ENCODE measurements at regions of chr7 and their contacts with region 1.

Region 1: GRCh38 chr7:16420649-16421332 is 547 bp downstream of the CRPPA start:
- DNase-seq: peak; percentile 93
- H3K4me3 Mint-ChIP-seq: peak overlapping the region; percentile 74
- H3K27ac Mint-ChIP-seq: peak overlapping the region; percentile 86
- H3K4me1 Mint-ChIP-seq: peaks cover 53% of the 10 kb centered on the region
- H3K27me3 Mint-ChIP-seq: no peaks in the 10 kb centered on the region
- CTCF ChIP-seq: peak; percentile 67

Region 2: DNA sequence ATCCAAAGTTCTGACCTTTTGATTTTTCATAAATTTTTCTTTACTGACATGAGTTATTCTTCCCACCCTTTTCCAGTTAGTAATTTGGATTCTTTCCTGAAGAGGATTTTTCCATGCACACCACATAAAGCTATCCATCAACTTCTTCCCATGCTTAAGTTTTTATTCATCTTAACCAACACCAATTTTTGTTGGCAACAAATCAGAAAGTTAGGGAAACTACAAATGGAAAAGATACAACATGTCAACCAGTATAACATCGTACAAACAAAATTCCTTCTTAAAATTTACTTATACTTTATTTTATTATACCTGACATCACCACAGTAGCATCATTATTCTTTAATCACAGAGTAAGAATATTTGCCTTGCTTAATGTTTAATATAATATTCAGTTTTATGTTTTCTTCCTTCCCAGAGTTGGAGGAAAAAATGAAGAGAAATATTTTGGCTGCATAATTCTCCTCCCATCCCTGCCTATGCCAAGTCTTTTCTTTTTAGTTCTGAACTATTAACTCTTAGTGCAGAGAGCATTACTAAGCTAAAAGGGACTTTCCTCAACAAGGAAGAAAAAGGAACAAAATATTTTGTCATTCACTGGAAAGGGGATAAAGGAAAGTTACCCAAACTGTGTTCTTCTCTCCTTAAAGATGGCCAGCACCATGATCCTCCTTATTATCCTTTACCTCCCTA is 666.8 kb before region 1 on chr7:
- CTCF ChIA-PET with region 1: no interaction called
- intact Hi-C with region 1: no loop called
- DNase-seq: no peak
- H3K4me3 Mint-ChIP-seq: no peak overlapping the region
- H3K27ac Mint-ChIP-seq: no peak overlapping the region
- H3K4me1 Mint-ChIP-seq: no peaks in the 10 kb centered on the region
- H3K27me3 Mint-ChIP-seq: no peaks in the 10 kb centered on the region
- CTCF ChIP-seq: no peak

Region 3: DNA sequence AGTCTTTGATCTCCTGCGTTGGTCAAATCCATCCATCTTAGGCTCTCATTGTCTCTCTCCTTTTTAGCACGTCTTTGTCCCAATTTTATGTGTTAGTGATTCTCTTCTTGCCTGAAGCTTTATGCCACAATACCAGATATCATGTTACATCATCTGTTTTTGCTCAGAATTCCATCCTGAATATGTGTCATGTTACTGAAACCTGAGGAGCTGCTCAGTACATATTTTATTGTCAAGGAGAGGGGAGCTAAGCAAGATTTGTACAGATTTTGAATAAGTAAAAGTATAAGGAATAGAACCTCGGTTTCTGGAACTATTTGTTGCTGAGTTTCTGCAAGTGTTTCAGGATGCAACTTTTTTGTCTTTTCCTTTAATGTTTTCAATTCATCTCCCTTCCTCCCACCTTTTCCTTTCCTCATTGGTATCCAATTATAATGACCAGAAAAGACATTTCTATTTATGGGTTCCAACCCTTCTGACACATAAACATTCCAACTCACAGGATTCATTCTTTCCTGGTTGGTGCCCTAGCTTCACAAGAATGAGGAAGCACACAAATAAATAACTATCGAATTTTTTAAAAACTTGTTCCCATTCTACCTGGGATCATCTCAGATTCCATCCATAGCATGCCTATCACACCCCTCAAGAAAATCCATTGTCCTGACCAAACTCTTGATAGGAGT is 291.2 kb before region 1 on chr7:
- CTCF ChIA-PET with region 1: no interaction called
- intact Hi-C with region 1: loop called (anchors 2 kb)
- DNase-seq: peak; percentile 30
- H3K4me3 Mint-ChIP-seq: peak overlapping the region; percentile 3
- H3K27ac Mint-ChIP-seq: peak overlapping the region; percentile 92
- H3K4me1 Mint-ChIP-seq: peaks cover 35% of the 10 kb centered on the region
- H3K27me3 Mint-ChIP-seq: no peaks in the 10 kb centered on the region
- CTCF ChIP-seq: no peak

Region 4: DNA sequence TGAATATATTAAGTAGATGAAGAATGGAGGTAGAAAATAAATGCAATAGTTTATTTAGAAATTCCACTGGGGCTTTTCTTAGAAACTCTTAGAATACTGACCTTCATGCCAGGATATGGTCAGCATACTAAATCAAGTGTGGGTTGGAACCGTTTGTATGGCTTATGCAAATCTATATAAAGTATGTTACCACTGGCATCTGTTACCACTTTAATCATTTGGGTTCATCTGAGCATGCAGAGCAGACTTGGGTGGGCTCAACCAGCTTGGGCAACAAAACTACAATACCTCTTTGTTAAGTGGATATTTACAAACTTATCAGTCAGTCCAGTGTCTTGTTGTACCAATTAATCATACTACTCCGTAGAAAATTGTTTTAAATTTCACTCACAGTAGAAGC is 125.2 kb before region 1 on chr7:
- CTCF ChIA-PET with region 1: no interaction called
- intact Hi-C with region 1: loop called (anchors 5 kb)
- DNase-seq: no peak
- H3K4me3 Mint-ChIP-seq: no peak overlapping the region
- H3K27ac Mint-ChIP-seq: no peak overlapping the region
- H3K4me1 Mint-ChIP-seq: peaks cover 44% of the 10 kb centered on the region
- H3K27me3 Mint-ChIP-seq: no peaks in the 10 kb centered on the region
- CTCF ChIP-seq: no peak